Esophagus muscularis mucosa (tissue), 4 donors: ENCODE measurements at regions of chr6 and their contacts with region 1.

Region 1: DNA sequence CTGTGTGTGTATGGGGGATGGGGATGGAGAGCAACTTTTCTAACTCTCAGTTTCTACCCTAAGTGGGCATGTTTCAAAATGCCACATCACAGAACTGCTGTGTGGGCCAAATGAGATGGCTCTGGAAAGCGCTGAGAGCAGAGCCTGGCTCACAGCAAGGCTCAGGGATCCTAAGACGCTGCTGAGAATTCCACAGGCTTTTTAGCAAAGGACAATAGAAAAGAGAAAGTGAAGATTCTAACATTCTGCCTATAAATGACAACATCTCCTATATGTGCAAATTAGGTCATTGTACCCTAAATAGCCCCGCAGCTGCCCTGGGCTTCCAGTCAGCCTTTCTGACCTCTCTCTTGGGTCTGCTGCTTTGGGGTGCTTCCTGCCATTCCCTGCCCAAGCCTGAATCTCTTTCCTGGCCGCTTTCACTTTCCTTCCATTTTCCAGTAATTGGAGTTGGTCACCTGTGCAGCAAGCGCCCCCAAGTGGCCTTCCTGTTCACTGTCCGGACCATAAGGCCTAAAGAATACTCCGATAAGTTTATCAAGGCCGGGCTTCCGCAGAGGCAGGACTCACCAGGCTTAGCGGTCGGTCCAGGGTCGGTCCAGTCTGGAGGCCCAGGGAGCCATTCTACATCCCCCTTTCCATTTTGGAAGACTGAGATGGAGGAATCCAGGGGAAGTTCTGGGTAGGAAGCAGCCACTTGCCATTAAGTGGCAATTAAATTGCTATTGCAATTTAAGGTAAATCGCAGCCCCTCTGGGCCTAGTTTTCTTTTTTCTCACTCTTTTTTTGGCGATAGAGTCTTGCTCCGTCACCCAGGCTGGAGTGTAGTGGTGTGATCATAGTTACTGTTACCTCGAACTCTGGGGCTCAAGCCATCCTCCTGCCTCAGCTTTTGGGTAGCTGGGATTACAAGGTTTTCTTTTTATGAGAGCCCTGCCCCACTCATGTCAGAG is 6.6 kb upstream of the DDR1 start:
- DNase-seq: peak; percentile 99
- H3K4me3 ChIP-seq: peak overlapping the region; percentile 22 to 54 (median 46)
- H3K27ac ChIP-seq: peak overlapping the region; percentile 80 to 83 (median 82)
- H3K4me1 ChIP-seq: peaks cover 22 to 44% (median 39%) of the 10 kb centered on the region in 4 donors
- H3K27me3 ChIP-seq: no peaks in the 10 kb centered on the region
- CTCF ChIP-seq: peak; percentile 89 to 95 (median 90)
- EP300 ChIP-seq: peak; percentile 23
- POLR2A ChIP-seq: no peak

Region 2: DNA sequence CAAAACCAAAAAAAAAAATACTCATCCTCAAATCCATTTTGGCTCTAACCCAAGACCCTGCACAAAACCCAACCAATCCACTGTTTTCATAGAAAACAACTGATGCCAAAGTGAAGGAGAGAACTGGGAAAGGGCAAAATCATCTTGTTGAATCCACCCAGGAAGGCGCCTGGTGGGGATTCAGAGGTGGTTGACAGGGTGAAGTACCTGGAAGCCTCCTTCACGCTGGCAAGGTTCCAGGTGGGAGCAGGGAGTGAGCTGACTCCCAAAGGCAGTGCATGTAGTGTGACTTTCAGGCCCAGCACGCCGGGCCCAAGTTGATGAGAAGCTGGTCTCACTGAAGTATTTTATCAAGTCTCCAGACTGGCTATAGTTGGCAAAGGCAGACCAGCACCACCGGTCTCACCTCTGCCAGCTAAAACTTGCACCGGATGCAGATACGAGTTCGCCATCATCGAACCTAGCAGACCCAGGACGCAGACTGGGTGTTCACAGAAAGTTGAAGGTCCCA is 277.2 kb before region 1 on chr6:
- intact Hi-C with region 1: no loop called
- DNase-seq: no peak
- H3K4me3 ChIP-seq: no peak overlapping the region
- H3K27ac ChIP-seq: no peak overlapping the region
- H3K4me1 ChIP-seq: peaks cover 0 to 10% (median 2%) of the 10 kb centered on the region in 4 donors
- H3K27me3 ChIP-seq: no peaks in the 10 kb centered on the region
- CTCF ChIP-seq: no peak
- EP300 ChIP-seq: no peak
- POLR2A ChIP-seq: no peak

Region 3: DNA sequence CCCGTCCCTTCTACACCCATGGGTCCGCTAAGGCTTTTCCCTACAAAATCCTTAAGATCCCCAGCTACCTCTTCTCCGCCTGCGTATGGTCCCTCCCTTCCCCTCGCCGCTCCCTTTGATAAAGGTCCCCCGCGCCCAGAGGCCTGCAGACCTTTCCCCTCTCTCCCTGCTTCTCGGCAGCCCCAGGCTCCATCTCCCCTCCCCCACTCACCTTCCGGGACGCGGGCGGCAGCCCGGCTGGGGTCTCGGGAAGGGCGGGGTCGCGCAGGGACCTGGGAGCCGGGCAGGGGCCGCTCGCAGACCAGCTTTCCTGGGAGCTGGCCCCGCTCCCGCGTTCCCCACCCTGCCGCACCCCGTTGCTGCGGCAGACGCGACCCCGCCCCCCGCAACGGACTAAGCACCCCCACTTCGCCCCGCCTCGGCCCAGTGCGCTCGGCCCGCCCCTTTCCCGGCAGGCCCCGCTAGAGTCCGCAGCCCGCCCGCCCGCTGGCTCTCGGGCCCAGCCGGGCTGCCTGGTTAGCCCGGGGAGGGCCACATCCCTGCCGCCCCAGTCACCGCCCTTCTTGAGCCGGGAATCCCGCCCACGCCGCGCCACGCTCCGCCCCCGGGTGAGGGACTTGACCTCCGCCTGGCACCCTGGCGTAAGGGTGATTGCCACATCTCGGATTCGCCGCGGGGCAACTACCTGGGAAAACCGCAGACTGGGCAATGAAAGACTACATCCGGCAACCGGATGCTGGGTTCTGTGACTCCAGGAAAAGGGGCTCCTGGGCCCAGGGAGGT is 135.2 kb before region 1 on chr6 and contains the start of gene FLOT1:
- intact Hi-C with region 1: loop called (anchors 5 kb)
- DNase-seq: peak; percentile 99
- H3K4me3 ChIP-seq: peak within 1 kb of the TSS; percentile 69 to 91 (median 84)
- H3K27ac ChIP-seq: peak within 1 kb of the TSS; percentile 90 to 99 (median 90)
- H3K4me1 ChIP-seq: peaks cover 40 to 66% (median 54%) of the 10 kb centered on the region in 4 donors
- H3K27me3 ChIP-seq: no peaks in the 10 kb centered on the region
- CTCF ChIP-seq: no peak
- EP300 ChIP-seq: no peak
- POLR2A ChIP-seq: peak; percentile 86
- total RNA-seq, gene FLOT1: 115 to 214 (median 166) TPM

Region 4: GRCh38 chr6:30828027-30828960 is 49.4 kb before region 1 on chr6:
- intact Hi-C with region 1: loop called (anchors 1 kb)
- DNase-seq: peak; percentile 97
- H3K4me3 ChIP-seq: peak overlapping the region in 2 of 4 donors; percentile 12 to 16
- H3K27ac ChIP-seq: peak overlapping the region; percentile 54 to 85 (median 74)
- H3K4me1 ChIP-seq: peaks cover 12 to 33% (median 25%) of the 10 kb centered on the region in 4 donors
- H3K27me3 ChIP-seq: no peaks in the 10 kb centered on the region
- CTCF ChIP-seq: peak; percentile 92 to 97 (median 95)
- EP300 ChIP-seq: peak; percentile 75
- POLR2A ChIP-seq: no peak

Region 5: DNA sequence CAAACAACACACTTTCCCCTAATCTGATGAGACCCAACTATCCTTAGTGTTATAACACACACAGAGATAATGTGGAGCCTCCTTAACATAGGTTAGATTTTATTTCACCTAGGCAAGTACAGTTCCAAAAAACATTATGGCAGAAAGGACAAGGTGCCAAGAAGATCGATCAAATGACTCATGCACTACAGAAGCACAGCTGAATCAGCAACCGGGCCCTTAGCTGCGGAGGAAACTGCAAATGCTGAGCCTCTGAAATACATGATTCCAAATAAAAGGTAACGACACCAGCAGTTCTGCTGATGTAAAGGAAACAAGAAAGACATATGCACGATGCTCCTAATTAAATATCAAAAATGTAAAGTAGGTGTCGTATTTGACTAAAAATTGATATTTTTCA is 85.9 kb after region 1 on chr6:
- intact Hi-C with region 1: no loop called
- DNase-seq: no peak
- H3K4me3 ChIP-seq: no peak overlapping the region
- H3K27ac ChIP-seq: no peak overlapping the region
- H3K4me1 ChIP-seq: no peaks in the 10 kb centered on the region
- H3K27me3 ChIP-seq: peaks cover 0 to 13% (median 0%) of the 10 kb centered on the region in 4 donors
- CTCF ChIP-seq: no peak
- EP300 ChIP-seq: no peak
- POLR2A ChIP-seq: no peak